Mammary epithelial cell (primary cell): ENCODE measurements at regions of chr9 and their contacts with region 1.

Region 1: DNA sequence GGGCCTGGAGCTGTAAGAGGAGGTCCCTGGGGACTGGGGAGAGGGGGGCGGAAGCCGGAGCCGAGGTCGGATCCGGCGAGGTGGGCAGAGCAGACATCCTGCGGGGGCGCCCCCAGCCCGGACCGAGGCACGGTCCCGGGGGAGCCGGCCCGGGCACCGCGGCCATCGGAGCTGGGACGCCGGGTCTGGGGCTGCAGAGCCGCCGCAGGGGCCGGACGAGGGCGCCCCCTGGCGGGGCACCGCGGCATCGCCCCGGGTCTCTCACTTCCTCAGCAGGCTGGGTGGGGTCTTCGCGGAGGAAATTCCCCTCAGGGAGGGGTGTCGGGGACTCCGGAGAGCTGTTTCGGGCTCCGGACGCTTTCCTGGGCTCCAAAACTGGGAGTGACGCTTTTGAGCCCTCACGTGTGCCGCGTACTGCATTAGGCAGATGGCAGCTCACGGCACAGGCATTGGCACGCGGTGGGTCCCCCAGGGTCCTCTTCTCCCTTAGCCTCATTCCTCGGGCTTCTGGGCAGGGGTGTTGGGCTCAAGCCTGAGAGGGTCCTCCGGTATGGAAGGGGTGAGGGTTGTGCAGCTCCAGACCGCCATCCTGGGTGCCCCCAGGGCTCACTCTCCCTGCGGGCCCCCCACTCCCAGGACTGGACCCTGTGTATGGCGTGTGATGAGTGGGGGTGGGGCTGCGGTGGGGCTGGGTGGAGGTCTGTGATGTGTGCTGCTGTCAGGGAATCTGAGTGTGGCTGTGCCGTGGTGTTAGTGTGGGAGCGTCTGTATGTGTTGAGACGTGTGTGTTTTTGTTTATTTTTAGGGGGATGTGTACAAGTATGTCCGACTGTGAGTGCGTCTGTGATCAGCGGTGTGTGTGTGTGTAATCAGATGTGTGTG is 29.6 kb downstream of the LHX2 start:
- DNase-seq: no peak
- H3K4me3 ChIP-seq: peak overlapping the region; percentile 28 to 45 (median 35)
- H3K27ac ChIP-seq: no peak overlapping the region
- H3K4me1 ChIP-seq: peaks cover 7% of the 10 kb centered on the region
- H3K27me3 ChIP-seq: peaks cover 12% of the 10 kb centered on the region
- CTCF ChIP-seq: peak; percentile 61 to 91

Region 2: GRCh38 chr9:123401879-123402513 is 639.2 kb before region 1 on chr9:
- CTCF ChIA-PET with region 1: no interaction called
- dilution Hi-C with region 1: no loop called
- in situ Hi-C with region 1: no loop called
- intact Hi-C with region 1: loop called (anchors 5 kb)
- DNase-seq: peak; percentile 11
- H3K4me3 ChIP-seq: no peak overlapping the region
- H3K27ac ChIP-seq: no peak overlapping the region
- H3K4me1 ChIP-seq: no peaks in the 10 kb centered on the region
- H3K27me3 ChIP-seq: no peaks in the 10 kb centered on the region
- CTCF ChIP-seq: peak; percentile 49 to 66

Region 3: DNA sequence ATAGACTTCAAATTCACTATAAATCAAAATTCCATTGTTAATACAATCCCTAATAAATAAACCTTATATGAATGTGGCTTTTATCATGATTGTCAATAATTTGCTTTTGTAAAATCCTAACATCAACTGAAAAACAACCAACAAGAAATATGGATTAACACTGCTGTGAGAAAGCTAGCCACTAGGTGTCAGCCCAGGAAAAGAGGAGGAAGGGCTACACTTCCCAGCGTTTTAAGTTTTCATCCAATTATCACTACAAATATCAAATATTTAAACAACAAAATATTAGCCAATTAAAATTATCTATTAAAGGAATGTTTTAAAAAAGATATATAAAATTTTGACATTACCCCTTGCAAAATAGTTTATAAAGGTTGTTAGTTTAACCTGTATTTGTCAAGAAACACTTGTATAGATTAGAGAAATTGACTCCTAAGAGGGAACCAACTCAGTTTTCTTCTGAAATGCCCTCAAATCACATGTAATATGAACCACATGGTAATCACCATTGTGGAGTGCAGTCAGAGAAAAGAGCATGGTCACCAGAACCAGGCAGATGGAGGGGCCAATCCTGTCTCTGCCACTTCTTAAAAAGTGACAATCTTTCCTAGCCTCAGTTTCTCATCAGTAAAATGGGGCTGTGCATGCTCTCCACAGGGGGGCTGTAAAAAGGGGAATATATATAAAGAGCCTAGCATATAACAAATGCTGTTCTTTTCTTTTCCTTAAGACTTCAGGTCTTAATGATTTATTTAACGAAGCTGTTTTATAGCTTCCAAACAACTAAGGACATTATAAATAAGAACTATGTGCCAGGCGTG is 497.0 kb before region 1 on chr9:
- CTCF ChIA-PET with region 1: no interaction called
- dilution Hi-C with region 1: no loop called
- in situ Hi-C with region 1: loop called (anchors 25 kb)
- intact Hi-C with region 1: loop called (anchors 1 kb)
- DNase-seq: no peak
- H3K4me3 ChIP-seq: no peak overlapping the region
- H3K27ac ChIP-seq: no peak overlapping the region
- H3K4me1 ChIP-seq: no peaks in the 10 kb centered on the region
- H3K27me3 ChIP-seq: no peaks in the 10 kb centered on the region
- CTCF ChIP-seq: peak; percentile 84 to 86

Region 4: DNA sequence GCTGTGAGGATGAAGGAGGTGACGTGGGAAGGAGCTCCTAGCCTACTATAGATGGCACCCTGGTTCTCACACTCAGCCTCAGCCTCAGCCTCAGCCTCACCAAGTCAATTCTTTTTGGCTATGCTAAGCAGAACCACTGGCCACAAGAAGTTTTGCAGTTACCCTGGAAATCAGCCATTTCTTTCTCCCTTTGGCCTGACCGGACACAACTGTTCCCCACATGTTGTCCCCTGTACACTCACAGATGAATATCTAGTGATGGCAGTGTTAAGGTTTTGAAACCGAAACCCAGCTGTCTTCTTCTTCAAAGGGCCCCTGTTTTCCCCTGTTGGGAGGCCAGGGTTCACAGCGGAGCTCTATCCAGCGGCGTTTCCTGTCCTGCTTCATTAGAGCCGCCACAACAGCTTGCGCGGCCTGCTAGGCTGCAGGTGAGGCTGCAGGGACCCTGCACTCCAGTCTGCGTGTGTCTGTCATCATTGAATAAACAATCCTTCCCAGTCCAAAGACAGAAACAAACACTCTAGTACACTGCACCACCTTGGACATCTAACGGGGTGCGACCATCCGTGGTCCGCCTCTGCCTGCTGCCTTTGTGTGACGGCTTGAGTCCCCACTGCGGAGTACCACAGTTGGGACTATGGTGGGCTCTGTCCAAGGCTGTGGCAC is 361.7 kb before region 1 on chr9:
- CTCF ChIA-PET with region 1: no interaction called
- dilution Hi-C with region 1: no loop called
- in situ Hi-C with region 1: no loop called
- intact Hi-C with region 1: no loop called
- DNase-seq: no peak
- H3K4me3 ChIP-seq: no peak overlapping the region
- H3K27ac ChIP-seq: no peak overlapping the region
- H3K4me1 ChIP-seq: no peaks in the 10 kb centered on the region
- H3K27me3 ChIP-seq: no peaks in the 10 kb centered on the region
- CTCF ChIP-seq: no peak

Region 5: DNA sequence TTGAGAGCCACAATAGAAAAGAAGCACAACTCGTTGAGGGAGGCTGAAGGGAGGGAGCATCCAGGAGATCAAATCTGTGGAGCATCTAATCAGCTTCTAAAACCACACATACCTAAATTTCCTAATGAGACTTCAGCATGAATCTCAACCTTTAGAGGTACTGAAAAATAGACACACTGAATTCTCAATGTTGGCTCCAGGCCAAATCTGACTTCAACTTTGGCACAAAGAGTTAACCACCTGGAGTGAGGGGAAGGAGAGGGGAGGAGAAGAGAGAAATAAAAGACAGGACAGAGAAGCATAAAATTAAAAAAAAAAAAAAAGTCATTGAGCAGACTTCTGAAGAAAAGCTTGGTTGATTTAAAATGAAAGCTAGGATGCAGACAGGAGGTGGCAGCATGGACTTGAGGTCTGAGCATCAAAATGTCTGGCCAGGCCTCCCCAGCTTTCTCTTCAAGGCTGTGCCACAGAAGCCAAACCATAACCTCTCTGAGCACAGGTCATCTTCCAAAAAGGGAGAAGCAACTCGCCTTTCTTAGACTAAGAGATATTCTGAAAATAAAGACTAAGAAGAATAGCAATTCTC is 316.9 kb before region 1 on chr9:
- CTCF ChIA-PET with region 1: no interaction called
- dilution Hi-C with region 1: no loop called
- in situ Hi-C with region 1: no loop called
- intact Hi-C with region 1: loop called (anchors 5 kb)
- DNase-seq: peak; percentile 6
- H3K4me3 ChIP-seq: no peak overlapping the region
- H3K27ac ChIP-seq: no peak overlapping the region
- H3K4me1 ChIP-seq: no peaks in the 10 kb centered on the region
- H3K27me3 ChIP-seq: no peaks in the 10 kb centered on the region
- CTCF ChIP-seq: no peak

Region 6: GRCh38 chr9:123988311-123989049 is 52.7 kb before region 1 on chr9:
- CTCF ChIA-PET with region 1: no interaction called
- dilution Hi-C with region 1: no loop called
- in situ Hi-C with region 1: no loop called
- intact Hi-C with region 1: no loop called
- DNase-seq: no peak
- H3K4me3 ChIP-seq: no peak overlapping the region
- H3K27ac ChIP-seq: no peak overlapping the region
- H3K4me1 ChIP-seq: no peaks in the 10 kb centered on the region
- H3K27me3 ChIP-seq: no peaks in the 10 kb centered on the region
- CTCF ChIP-seq: no peak

Region 7: DNA sequence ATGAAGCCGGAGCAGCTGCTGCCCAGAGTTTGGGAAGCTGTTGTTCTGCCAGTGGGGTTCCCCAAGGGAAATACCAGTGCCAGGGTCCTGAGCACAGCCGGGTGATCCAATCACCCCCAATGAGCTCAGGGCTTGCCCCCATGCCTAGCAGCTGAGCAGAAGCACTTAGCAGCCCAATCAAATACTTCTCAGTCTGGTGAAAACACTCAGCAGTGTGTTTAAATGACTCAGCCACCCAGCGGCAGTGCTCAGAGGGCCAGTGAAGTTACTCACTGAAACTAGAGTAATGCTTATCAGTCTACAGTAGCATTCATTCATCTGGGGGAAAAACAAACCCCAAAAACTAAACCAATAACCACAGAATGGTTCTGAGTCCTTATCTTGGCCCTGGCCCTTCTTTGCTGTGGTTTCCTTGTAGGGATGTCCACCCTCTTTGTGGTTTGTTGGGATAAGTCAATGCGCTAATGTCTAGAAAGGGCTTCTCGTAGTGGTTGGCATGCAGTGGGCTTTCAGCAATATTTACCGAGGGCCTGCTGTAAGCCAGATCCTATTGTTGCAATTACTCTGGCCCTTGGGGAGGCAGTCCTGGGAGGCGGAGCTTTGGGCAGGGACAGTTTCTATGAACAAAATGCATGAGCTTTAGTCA is 13.5 kb after region 1 on chr9:
- CTCF ChIA-PET with region 1: no interaction called
- dilution Hi-C with region 1: no loop called
- in situ Hi-C with region 1: no loop called
- intact Hi-C with region 1: loop called (anchors 1 kb)
- DNase-seq: peak; percentile 83
- H3K4me3 ChIP-seq: no peak overlapping the region
- H3K27ac ChIP-seq: no peak overlapping the region
- H3K4me1 ChIP-seq: no peaks in the 10 kb centered on the region
- H3K27me3 ChIP-seq: peaks cover 3% of the 10 kb centered on the region
- CTCF ChIP-seq: no peak